Heart left ventricle (tissue), 16 donors: ENCODE measurements at regions of chr10 and their contacts with region 1.

Region 1: GRCh38 chr10:31620226-31621151 is 301.5 kb downstream of the ZEB1 start:
- DNase-seq: peak; percentile 78 to 86 (median 83)
- ATAC-seq: peak; percentile 36 to 78 (median 44)
- H3K4me3 ChIP-seq: no peak overlapping the region
- H3K27ac ChIP-seq: peak overlapping the region in 11 of 12 donors; percentile 6 to 82 (median 69)
- H3K4me1 ChIP-seq: peaks cover 0 to 62% (median 36%) of the 10 kb centered on the region in 12 donors
- H3K27me3 ChIP-seq: no peaks in the 10 kb centered on the region
- CTCF ChIP-seq: peak in 11 of 12 donors; percentile 25 to 57 (median 33)
- POLR2A ChIP-seq: no peak

Region 2: DNA sequence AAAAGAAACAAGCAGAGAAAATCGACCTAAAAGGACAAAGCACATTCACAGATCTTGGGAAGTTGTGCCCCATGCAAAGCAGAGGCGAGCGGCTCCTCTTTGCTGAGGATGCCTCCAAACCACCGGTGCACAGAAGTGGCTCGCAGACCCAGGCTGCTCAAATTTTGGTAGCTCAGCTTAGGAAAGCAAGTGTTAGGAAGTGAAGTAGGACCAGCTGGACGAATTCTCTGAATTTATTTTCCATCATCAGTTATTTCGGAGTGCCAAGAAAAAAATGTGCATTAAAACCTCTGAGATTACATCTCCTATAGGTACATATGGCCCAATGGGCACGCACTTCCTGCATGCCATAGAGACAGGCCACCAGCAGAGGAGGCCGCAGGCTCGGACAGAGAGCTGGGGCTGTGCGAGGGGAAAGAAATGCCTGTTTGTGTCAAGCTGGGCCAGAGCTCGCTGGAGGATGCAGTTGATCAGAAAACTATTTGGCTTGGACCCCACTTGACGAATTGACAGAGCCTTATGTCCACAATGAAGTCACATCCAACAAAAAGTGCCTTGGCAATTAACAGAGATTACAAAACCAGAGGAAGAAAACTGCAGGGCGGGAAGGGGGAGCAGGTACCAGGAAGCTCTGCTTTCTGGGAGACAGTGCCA is 868.7 kb before region 1 on chr10:
- intact Hi-C with region 1: loop called in 1 of 10 experiments (anchors 10 kb)
- DNase-seq: peak in 4 of 5 donors; percentile 69 to 84 (median 80)
- ATAC-seq: peak; percentile 64 to 87 (median 77)
- H3K4me3 ChIP-seq: no peak overlapping the region
- H3K27ac ChIP-seq: peak overlapping the region in 9 of 12 donors; percentile 3 to 68 (median 34)
- H3K4me1 ChIP-seq: peaks cover 0 to 23% (median 6%) of the 10 kb centered on the region in 12 donors
- H3K27me3 ChIP-seq: no peaks in the 10 kb centered on the region
- CTCF ChIP-seq: peak in 11 of 12 donors; percentile 12 to 97 (median 91)
- POLR2A ChIP-seq: no peak

Region 3: GRCh38 chr10:31157123-31158010 is 463.1 kb before region 1 on chr10:
- intact Hi-C with region 1: loop called in 1 of 10 experiments (anchors 5 kb)
- DNase-seq: peak; percentile 82 to 87 (median 86)
- ATAC-seq: peak; percentile 77 to 93 (median 90)
- H3K4me3 ChIP-seq: peak overlapping the region in 3 of 12 donors; percentile 0 to 12 (median 6)
- H3K27ac ChIP-seq: peak overlapping the region; percentile 12 to 83 (median 76)
- H3K4me1 ChIP-seq: peaks cover 3 to 36% (median 29%) of the 10 kb centered on the region in 12 donors
- H3K27me3 ChIP-seq: no peaks in the 10 kb centered on the region
- CTCF ChIP-seq: no peak
- POLR2A ChIP-seq: no peak

Region 4: DNA sequence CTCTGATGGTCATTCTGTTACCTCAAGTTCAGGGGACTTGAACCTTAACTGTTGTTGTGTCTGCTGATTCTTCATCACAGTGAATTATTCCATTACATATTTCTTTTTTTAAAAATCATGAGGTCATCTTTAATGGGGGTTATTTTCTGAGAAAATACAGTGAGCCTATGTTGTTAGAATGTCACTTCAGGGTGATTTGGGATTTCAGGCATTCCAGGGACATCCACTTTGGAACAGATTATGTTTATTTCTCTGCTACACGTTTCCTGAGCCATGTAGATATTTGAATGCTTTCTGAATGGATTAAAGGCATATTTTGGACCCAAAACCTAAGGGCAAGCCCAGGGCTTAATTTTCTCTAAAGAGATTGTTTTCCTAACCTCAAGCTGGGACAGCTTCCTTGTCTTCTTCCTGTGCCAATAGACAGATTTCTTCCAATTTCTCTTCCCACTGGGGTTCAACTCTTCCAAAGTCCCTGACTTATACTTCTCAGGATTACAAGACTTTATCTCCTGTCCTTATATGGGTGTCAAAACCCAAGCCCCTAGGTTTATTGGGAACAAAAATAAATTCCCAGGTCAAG is 36.5 kb after region 1 on chr10:
- intact Hi-C with region 1: loop called in 1 of 10 experiments (anchors 2 kb)
- DNase-seq: no peak
- ATAC-seq: peak; percentile 57 to 79 (median 70)
- H3K4me3 ChIP-seq: no peak overlapping the region
- H3K27ac ChIP-seq: peak overlapping the region in 10 of 12 donors; percentile 23 to 83 (median 66)
- H3K4me1 ChIP-seq: peaks cover 0 to 15% (median 0%) of the 10 kb centered on the region in 12 donors
- H3K27me3 ChIP-seq: no peaks in the 10 kb centered on the region
- CTCF ChIP-seq: no peak
- POLR2A ChIP-seq: no peak

Region 5: DNA sequence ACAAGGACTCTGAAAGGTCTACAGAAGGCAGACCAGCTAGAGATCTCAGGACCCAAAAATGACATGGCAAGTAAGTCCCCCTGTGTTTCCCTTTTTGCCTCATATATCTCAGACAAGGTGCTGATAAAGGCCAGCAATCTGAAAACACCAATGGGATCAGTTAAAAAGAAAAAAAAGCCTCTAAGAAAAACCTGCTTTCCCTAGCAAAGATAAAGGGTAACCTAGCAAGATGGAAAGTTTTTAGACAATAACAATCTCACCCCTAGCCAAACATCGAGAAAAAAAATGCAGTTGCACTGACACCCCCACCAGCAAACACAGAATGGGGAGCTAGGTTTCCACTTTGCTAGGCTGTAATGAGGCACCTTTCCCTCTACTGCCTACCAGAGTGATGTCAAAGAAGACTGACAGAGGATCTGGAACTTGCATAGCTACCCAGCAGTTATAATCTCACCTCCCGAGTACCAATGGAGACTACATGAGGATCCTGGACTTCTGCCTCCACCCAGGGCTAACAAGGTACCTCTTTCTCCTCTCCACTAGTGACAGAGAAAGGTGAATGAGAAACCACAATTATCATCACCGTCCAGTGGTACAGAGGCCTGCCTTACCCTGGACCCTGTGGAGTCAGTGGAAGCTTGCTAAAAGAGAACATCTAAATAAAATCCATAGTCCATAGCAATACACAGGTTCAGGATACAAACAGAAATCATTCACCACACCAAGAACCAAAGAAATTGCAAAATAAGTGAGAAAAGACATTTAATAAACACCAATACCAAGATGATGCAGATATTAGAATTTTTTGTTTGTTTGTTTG is 67.4 kb after region 1 on chr10:
- intact Hi-C with region 1: loop called in 2 of 10 experiments (anchors 5 to 10 kb)
- DNase-seq: no peak
- ATAC-seq: no peak
- H3K4me3 ChIP-seq: no peak overlapping the region
- H3K27ac ChIP-seq: no peak overlapping the region
- H3K4me1 ChIP-seq: no peaks in the 10 kb centered on the region
- H3K27me3 ChIP-seq: no peaks in the 10 kb centered on the region
- CTCF ChIP-seq: no peak
- POLR2A ChIP-seq: no peak

Region 6: DNA sequence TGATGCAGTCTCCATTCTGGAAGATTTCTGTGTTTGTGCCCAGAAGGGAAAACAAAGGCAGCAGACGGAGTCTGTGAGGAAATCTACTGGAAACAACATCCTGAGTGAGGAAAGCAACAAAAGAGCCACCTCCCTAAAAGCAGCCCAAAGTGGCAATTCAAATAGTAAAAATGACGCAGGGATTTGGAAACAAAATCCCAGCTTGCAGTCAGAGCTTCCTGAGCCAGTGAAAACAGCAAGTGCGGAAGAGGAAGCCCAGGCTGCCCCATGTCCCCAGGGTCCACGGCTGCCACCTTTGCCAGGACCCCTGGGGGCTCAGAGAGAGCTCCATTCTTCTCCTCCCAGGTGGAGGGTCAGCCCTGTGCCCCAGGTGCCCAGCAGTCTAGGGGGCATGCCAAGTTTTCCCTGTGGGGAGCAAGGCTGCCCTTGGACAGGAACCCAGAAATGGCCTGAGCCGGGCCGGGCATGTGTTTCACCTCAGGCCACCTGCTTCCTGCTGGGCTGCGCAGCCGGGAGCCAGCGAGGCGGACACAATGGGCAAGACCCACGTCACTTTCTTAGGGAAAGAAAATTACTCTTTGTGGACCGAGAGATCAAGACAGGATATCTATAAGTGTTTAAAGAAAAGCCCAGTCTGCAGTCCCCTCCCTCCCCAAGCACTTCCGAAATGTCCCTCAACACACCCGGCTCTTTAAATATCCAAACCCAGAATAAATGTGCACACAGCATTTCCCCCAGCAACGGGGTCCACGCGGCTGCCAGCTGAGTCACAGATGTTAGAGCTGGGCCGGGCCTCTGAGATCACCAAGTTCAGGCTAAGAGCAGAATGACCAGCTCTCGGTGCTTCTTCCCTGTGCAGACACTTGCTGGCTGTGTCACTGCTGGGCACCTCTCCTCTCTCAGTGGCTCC is 77.0 kb after region 1 on chr10:
- intact Hi-C with region 1: loop called in 1 of 10 experiments (anchors 5 kb)
- DNase-seq: peak; percentile 88 to 93 (median 92)
- ATAC-seq: peak; percentile 84 to 89 (median 86)
- H3K4me3 ChIP-seq: peak overlapping the region in 9 of 12 donors; percentile 15 to 42 (median 27)
- H3K27ac ChIP-seq: peak overlapping the region; percentile 88 to 99 (median 96)
- H3K4me1 ChIP-seq: peaks cover 11 to 81% (median 54%) of the 10 kb centered on the region in 12 donors
- H3K27me3 ChIP-seq: no peaks in the 10 kb centered on the region
- CTCF ChIP-seq: no peak
- POLR2A ChIP-seq: peak in 1 of 2 donors; percentile 30

Region 7: DNA sequence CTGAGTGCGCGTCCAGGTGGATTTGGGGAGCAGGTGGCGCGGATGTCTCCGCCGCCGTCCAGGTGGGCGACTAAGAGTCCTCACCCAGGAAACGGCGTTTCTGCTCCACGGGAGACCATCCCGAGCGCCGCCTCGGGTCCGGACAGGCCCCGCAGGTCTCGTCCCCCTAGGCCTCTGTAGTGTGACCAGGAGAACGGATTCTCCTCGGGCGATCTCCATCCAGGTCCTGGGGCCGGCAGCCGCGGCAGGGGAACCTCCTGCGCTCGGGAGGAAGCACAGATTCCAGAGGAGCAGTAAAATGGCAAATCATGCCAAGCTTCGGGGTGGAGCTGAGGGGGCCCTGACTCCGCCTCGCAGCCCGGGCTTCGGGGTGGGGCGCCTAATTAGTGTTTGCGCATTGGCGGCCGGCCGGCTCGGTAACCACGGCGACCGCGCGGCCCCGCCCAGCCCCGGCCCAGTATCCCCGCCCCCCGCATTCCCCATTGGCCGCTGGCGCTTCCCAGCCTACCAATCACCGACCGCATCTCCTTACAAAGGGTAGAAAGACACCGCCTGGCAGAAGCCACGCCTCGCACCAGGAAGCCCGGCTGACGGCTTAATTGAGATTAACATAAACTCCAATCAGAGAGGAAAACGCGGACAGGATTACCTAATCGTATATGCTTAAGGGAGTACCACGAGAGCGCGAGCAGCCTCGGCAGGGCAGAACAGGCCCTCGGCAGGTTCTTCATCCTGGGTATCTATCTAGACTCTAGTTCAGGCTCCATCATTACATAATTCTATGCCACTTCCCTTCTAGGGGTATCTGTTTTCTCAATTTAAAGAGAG is 139.5 kb after region 1 on chr10:
- intact Hi-C with region 1: loop called in 2 of 10 experiments (anchors 10 kb)
- DNase-seq: peak; percentile 96 to 97 (median 97)
- ATAC-seq: peak; percentile 95 to 97 (median 97)
- H3K4me3 ChIP-seq: peak overlapping the region; percentile 68 to 98 (median 92)
- H3K27ac ChIP-seq: peak overlapping the region; percentile 91 to 100 (median 98)
- H3K4me1 ChIP-seq: peaks cover 0 to 44% (median 25%) of the 10 kb centered on the region in 12 donors
- H3K27me3 ChIP-seq: no peaks in the 10 kb centered on the region
- CTCF ChIP-seq: no peak
- POLR2A ChIP-seq: peak; percentile 78 to 96